ENCODE measurements at regions of chr2 and their contacts with region 1.

Region 1: GRCh38 chr2:143246815-143247744 is 117.9 kb downstream of the ARHGAP15 start:
- DNase-seq: peak; percentile 44 to 59 (median 45)
- H3K4me3 ChIP-seq: peak overlapping the region; percentile 71 to 74
- H3K4me3 Mint-ChIP-seq: no peak overlapping the region
- H3K27ac ChIP-seq: peak overlapping the region; percentile 43
- H3K27ac Mint-ChIP-seq: peak overlapping the region in 1 of 7 donors; percentile 97
- H3K4me1 ChIP-seq: peaks cover 71% of the 10 kb centered on the region
- H3K4me1 Mint-ChIP-seq: peaks cover 20 to 31% (median 24%) of the 10 kb centered on the region in 4 donors
- H3K27me3 ChIP-seq: no peaks in the 10 kb centered on the region
- H3K27me3 Mint-ChIP-seq: no peaks in the 10 kb centered on the region

Region 2: DNA sequence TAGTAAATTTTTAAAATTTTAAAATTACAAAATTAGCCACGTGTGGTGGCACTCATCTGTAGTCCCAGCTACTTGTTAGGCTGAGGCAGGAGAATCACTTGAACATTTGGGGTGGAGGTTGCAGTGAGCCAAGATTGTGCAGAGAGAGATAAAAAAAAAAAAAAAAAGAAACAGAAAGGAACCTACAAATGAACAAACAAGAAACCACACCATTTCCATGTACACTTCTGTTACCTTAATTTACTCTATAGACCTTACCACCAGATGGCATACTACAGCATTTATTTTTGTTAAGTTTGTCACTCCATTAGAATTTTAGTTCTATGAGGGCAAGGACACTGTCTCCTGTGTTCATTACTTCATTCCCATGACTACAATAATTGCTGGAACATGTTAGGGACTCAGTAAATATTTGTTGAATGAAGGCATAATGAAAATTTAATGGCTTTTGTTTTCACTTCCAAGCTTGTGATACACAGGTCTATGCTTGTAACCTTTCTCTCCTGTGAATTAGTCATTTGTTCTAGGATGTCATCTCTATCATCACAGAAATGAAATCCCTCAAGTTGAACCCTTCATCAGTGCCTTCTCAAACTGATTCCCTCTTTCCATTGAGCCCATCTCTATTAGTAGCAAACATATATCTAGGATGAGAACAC is 41.8 kb before region 1 on chr2:
- CTCF ChIA-PET with region 1: interaction called, 14 read pairs
- POLR2A ChIA-PET with region 1: interaction called, 3 read pairs
- intact Hi-C with region 1: no loop called
- DNase-seq: peak in 4 of 5 donors; percentile 54 to 60 (median 57)
- H3K4me3 ChIP-seq: no peak overlapping the region
- H3K4me3 Mint-ChIP-seq: peak overlapping the region in 4 of 8 donors; percentile 16 to 64 (median 34)
- H3K27ac ChIP-seq: no peak overlapping the region
- H3K27ac Mint-ChIP-seq: peak overlapping the region in 5 of 7 donors; percentile 39 to 77 (median 67)
- H3K4me1 ChIP-seq: peaks cover 42% of the 10 kb centered on the region
- H3K4me1 Mint-ChIP-seq: peaks cover 55 to 66% (median 57%) of the 10 kb centered on the region in 4 donors
- H3K27me3 ChIP-seq: no peaks in the 10 kb centered on the region
- H3K27me3 Mint-ChIP-seq: no peaks in the 10 kb centered on the region

Region 3: DNA sequence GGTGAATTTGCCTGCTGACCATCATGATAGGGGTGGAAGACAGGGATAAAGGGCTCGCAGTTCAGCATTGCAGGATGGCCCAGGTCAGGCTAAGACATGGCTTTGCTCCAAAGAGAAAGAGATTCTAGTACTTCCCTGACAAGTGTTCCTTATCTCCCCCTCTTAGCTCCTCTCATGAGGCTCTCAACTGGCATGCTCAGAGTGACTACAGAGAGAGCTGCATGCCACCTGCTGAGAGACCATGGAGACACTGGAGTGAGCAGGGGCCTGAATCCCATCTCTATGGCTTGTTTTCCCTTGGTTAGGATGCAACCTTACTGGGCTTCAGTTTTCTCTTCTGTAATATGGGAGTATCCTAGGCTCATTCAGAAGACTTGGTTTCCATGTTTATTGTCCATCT is 23.5 kb before region 1 on chr2:
- CTCF ChIA-PET with region 1: interaction called, 18 read pairs
- POLR2A ChIA-PET with region 1: interaction called, 14 read pairs
- intact Hi-C with region 1: loop called (anchors 2 kb)
- DNase-seq: no peak
- H3K4me3 ChIP-seq: no peak overlapping the region
- H3K4me3 Mint-ChIP-seq: peak overlapping the region in 2 of 8 donors; percentile 20 to 34
- H3K27ac ChIP-seq: no peak overlapping the region
- H3K27ac Mint-ChIP-seq: peak overlapping the region in 4 of 7 donors; percentile 63 to 75 (median 70)
- H3K4me1 ChIP-seq: peaks cover 70% of the 10 kb centered on the region
- H3K4me1 Mint-ChIP-seq: peaks cover 44 to 69% (median 58%) of the 10 kb centered on the region in 4 donors
- H3K27me3 ChIP-seq: no peaks in the 10 kb centered on the region
- H3K27me3 Mint-ChIP-seq: no peaks in the 10 kb centered on the region

Region 4: DNA sequence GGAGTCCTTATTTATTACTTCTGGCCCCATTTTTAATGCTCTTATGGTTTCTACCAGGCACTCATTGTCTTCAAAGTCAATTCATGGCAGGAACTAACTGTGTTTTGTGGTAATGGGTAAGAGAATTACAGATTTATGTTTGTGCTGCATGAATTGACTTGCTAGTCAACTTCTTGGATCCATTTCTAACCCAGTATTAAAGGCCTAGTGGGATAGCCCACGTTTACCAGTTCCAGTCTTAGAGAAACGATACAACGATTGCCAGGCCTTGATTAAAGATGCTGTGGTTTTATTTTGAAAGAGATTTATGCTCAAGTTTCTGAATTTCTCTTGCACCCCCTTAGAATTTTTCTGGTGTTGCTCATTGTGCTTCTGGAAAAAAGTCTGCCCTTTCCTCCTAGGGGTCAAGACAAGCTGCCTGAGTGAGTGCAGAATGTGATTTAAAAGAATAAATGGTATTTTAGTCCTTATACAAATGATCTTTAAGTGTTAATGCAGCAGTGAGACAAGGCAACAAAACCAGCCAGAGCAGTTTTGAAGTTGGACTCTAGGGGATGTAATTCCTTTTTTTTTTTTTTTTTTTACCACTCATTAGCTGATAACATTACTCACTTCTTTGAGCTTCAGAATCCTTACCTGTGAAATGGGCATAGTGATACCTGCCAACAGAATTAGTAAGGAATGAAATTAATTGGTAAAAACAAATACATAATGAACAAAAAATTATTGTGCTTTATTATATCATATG is 16.4 kb before region 1 on chr2:
- CTCF ChIA-PET with region 1: interaction called, 4 read pairs
- POLR2A ChIA-PET with region 1: interaction called, 14 read pairs
- intact Hi-C with region 1: loop called (anchors 2 kb)
- DNase-seq: no peak
- H3K4me3 ChIP-seq: no peak overlapping the region
- H3K4me3 Mint-ChIP-seq: peak overlapping the region in 2 of 8 donors; percentile 54 to 58
- H3K27ac ChIP-seq: no peak overlapping the region
- H3K27ac Mint-ChIP-seq: peak overlapping the region in 2 of 7 donors; percentile 13 to 72
- H3K4me1 ChIP-seq: peaks cover 26% of the 10 kb centered on the region
- H3K4me1 Mint-ChIP-seq: peaks cover 19 to 46% (median 25%) of the 10 kb centered on the region in 4 donors
- H3K27me3 ChIP-seq: no peaks in the 10 kb centered on the region
- H3K27me3 Mint-ChIP-seq: no peaks in the 10 kb centered on the region

Measured in CD4-positive, alpha-beta memory T cell (primary cell).